Dorsolateral prefrontal cortex (tissue), 120 donors: ENCODE measurements at regions of chr3 and their contacts with region 1.

Region 1: GRCh38 chr3:98483130-98483482 is 14.4 kb upstream of the OR5K2 start:
- DNase-seq: no peak
- H3K4me3 ChIP-seq: no peak overlapping the region
- H3K27ac ChIP-seq: no peak overlapping the region
- H3K27me3 ChIP-seq: peaks cover 0 to 7% (median 0%) of the 10 kb centered on the region in 45 donors
- CTCF ChIP-seq: no peak

Region 2: GRCh38 chr3:97839944-97840343 is 643.2 kb before region 1 on chr3:
- intact Hi-C with region 1: no loop called
- DNase-seq: no peak
- H3K4me3 ChIP-seq: no peak overlapping the region
- H3K27ac ChIP-seq: no peak overlapping the region
- H3K27me3 ChIP-seq: no peaks in the 10 kb centered on the region
- CTCF ChIP-seq: no peak

Region 3: GRCh38 chr3:98406034-98406433 is 77.1 kb before region 1 on chr3:
- intact Hi-C with region 1: loop called in 1 of 2 experiments (anchors 10 kb)
- DNase-seq: no peak
- H3K4me3 ChIP-seq: no peak overlapping the region
- H3K27ac ChIP-seq: no peak overlapping the region
- H3K27me3 ChIP-seq: no peaks in the 10 kb centered on the region
- CTCF ChIP-seq: no peak

Region 4: DNA sequence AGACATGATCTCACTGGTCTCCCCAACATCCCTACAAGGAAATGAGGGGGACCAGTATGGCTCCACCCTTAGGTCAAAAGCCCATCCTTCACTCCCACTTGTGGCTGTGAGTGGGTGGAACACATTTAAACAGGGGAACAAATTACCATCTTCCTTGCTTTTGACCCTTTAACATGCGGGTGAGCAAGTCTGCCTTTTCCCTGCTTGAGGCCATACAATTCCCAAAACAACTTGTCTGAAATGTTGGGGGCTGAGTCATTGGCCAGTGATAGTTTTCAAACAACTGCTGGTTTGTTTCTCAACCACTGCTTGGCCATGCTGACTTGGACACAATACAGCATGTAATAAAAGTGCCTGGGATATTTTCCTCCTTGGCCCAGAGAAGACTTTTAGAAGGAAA is 1194.9 kb after region 1 on chr3:
- intact Hi-C with region 1: no loop called
- DNase-seq: no peak
- H3K4me3 ChIP-seq: no peak overlapping the region
- H3K27ac ChIP-seq: no peak overlapping the region
- H3K27me3 ChIP-seq: peaks cover 0 to 6% (median 0%) of the 10 kb centered on the region in 45 donors
- CTCF ChIP-seq: no peak